ENCODE measurements at regions of chr7 and their contacts with region 1.

Region 1: GRCh38 chr7:50418086-50418515 is 32.0 kb downstream of the FIGNL1 start:
- DNase-seq: peak; percentile 87
- H3K4me3 Mint-ChIP-seq: no peak overlapping the region
- H3K27ac Mint-ChIP-seq: no peak overlapping the region
- H3K4me1 Mint-ChIP-seq: peaks cover 24% of the 10 kb centered on the region
- H3K27me3 Mint-ChIP-seq: no peaks in the 10 kb centered on the region

Region 2: GRCh38 chr7:48839108-48839507 is 1579.0 kb before region 1 on chr7:
- CTCF ChIA-PET with region 1: no interaction called
- POLR2A ChIA-PET with region 1: no interaction called
- intact Hi-C with region 1: no loop called
- DNase-seq: no peak
- H3K4me3 Mint-ChIP-seq: no peak overlapping the region
- H3K27ac Mint-ChIP-seq: no peak overlapping the region
- H3K4me1 Mint-ChIP-seq: no peaks in the 10 kb centered on the region
- H3K27me3 Mint-ChIP-seq: no peaks in the 10 kb centered on the region

Region 3: GRCh38 chr7:49731836-49732235 is 686.3 kb before region 1 on chr7:
- CTCF ChIA-PET with region 1: no interaction called
- POLR2A ChIA-PET with region 1: no interaction called
- intact Hi-C with region 1: no loop called
- DNase-seq: no peak
- H3K4me3 Mint-ChIP-seq: no peak overlapping the region
- H3K27ac Mint-ChIP-seq: no peak overlapping the region
- H3K4me1 Mint-ChIP-seq: no peaks in the 10 kb centered on the region
- H3K27me3 Mint-ChIP-seq: no peaks in the 10 kb centered on the region

Region 4: DNA sequence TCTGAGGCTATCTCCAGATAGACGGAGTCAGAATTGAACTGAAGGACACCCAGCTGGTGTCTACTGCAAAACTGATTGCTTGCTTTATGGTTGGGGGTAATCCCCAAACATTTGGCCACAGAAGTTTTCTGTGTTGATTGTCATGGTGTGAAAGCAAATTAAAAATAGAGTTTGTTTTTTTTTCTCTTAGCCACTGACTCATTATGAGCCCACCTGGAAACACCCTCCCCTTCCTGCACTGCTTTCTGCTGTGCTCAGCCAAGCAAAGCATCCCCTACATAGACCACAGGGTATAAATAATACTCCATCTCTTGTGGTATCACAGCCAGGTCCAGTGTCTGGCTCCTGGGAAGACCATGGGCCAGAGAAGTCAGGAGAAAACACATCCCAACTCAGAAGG is 651.1 kb before region 1 on chr7:
- CTCF ChIA-PET with region 1: no interaction called
- POLR2A ChIA-PET with region 1: no interaction called
- intact Hi-C with region 1: no loop called
- DNase-seq: no peak
- H3K4me3 Mint-ChIP-seq: no peak overlapping the region
- H3K27ac Mint-ChIP-seq: no peak overlapping the region
- H3K4me1 Mint-ChIP-seq: no peaks in the 10 kb centered on the region
- H3K27me3 Mint-ChIP-seq: peaks cover 14% of the 10 kb centered on the region

Region 5: DNA sequence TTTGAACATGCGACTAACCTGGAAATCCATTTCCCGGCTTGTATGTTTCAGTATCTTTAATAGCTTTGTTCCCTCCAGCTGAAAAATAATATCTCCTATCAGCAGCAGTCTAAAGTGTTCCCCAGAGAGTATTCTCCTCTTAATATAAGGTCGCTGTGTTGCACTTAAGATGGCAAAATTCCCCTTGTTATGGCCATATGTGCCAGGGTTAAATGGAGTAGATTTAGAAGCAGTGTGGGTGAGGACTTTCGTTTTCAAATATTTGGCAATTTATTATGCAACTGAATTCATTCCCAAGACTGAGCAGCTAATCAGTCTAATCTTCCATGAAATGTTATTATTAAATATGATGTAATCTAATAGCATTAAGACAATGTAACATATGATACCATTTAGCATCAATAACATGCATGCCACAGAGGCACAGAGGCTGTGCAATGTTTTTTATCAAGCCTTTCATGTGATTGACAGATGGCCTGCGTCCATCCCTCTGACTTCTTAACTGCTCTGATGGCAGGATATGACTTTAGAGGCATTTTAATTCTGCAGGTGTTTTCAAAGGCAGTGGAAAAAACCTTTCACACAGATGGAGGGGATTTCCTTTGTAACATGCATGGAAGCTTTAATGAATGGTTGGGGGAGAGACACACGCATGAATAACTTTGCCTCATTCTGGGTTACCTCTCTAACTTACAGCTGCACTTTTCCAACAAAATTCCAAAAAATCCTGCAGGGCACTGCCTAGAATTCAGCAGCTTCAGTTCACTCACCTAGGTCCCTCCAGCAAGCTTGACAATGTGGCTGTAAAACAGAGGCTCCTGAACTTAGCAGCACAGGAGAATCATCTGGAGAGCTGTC is 269.9 kb before region 1 on chr7:
- CTCF ChIA-PET with region 1: interaction called, 96 read pairs
- POLR2A ChIA-PET with region 1: no interaction called
- intact Hi-C with region 1: no loop called
- DNase-seq: peak; percentile 41
- H3K4me3 Mint-ChIP-seq: peak overlapping the region; percentile 16
- H3K27ac Mint-ChIP-seq: peak overlapping the region; percentile 54
- H3K4me1 Mint-ChIP-seq: peaks cover 70% of the 10 kb centered on the region
- H3K27me3 Mint-ChIP-seq: no peaks in the 10 kb centered on the region

Region 6: DNA sequence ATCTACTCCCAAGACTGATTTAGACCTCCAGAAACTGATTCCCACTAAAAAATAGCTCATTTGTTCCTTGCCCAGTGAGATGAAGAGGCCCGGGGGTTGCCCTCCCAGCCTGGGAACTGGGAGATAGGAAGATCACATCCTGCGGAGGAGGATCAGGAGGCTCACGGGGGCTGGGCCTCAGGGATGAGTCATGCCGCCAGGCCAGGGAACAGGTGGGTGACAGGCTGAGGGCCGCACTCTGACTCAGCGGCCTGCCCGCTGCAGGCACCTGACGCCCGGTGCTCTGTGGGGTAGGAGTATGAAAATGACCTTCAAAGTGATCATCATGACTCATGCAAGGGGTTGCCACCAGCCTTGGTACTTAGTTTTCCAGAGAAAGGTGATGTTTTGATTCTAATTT is 220.6 kb before region 1 on chr7:
- CTCF ChIA-PET with region 1: interaction called, 131 read pairs
- POLR2A ChIA-PET with region 1: no interaction called
- intact Hi-C with region 1: loop called (anchors 1 kb)
- DNase-seq: peak; percentile 90
- H3K4me3 Mint-ChIP-seq: peak overlapping the region; percentile 13
- H3K27ac Mint-ChIP-seq: peak overlapping the region; percentile 58
- H3K4me1 Mint-ChIP-seq: peaks cover 34% of the 10 kb centered on the region
- H3K27me3 Mint-ChIP-seq: peaks cover 2% of the 10 kb centered on the region

Region 7: DNA sequence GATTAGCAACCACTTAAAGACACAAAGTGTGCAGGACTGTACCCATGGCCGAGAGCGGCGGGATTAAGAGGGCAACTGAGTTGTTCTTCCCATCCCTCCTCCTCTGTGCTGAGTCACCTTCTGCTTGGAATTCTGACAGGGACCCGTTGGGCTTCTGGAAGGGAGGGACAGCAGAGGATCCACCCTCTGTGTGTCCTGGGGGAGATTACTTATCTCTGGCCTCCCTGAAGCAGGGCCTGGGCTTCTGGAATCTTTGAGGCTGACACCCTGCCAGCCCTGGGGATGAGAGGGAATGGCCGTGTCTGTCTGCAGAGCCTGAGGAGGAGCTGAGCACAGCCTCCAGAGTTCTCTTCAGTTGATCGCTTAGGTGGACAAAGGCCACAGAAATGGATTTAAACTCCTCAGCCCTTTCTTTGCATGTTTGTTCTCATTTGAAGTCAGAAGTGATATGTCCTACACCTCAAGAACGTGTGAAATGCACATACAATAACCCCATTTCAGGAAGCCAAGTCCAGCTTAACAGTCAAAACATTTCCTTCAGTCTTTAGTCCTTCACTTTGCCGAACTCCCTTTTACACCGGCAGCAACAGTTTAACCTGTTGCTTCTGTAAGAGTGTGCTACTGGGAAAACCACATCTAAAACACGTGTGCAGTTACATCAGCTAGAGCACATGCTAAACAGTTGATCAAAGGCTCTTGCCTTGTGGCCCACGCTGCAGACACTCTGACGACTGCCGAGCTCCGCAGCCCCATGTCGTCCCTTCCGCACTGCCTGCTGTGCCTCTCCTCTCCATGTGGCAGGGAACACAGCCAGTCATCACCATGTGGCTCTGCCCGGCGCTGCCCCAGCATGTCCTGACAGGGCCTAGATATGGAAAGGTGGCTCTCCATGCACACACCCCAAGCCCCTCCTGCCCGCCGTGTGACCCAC is 57.8 kb before region 1 on chr7:
- CTCF ChIA-PET with region 1: interaction called, 10 read pairs
- POLR2A ChIA-PET with region 1: no interaction called
- intact Hi-C with region 1: no loop called
- DNase-seq: peak; percentile 90
- H3K4me3 Mint-ChIP-seq: peak overlapping the region; percentile 61
- H3K27ac Mint-ChIP-seq: peak overlapping the region; percentile 97
- H3K4me1 Mint-ChIP-seq: peaks cover 98% of the 10 kb centered on the region
- H3K27me3 Mint-ChIP-seq: no peaks in the 10 kb centered on the region

Region 8: GRCh38 chr7:50379539-50379938 is 38.6 kb before region 1 on chr7:
- CTCF ChIA-PET with region 1: interaction called, 15 read pairs
- POLR2A ChIA-PET with region 1: no interaction called
- intact Hi-C with region 1: no loop called
- DNase-seq: no peak
- H3K4me3 Mint-ChIP-seq: no peak overlapping the region
- H3K27ac Mint-ChIP-seq: peak overlapping the region; percentile 34
- H3K4me1 Mint-ChIP-seq: peaks cover 94% of the 10 kb centered on the region
- H3K27me3 Mint-ChIP-seq: no peaks in the 10 kb centered on the region

Region 9: GRCh38 chr7:50404392-50404791 is 13.7 kb before region 1 on chr7:
- CTCF ChIA-PET with region 1: interaction called, 20 read pairs
- POLR2A ChIA-PET with region 1: no interaction called
- intact Hi-C with region 1: no loop called
- DNase-seq: no peak
- H3K4me3 Mint-ChIP-seq: no peak overlapping the region
- H3K27ac Mint-ChIP-seq: peak overlapping the region; percentile 49
- H3K4me1 Mint-ChIP-seq: peaks cover 81% of the 10 kb centered on the region
- H3K27me3 Mint-ChIP-seq: no peaks in the 10 kb centered on the region

Region 10: GRCh38 chr7:51482976-51483375 is 1064.9 kb after region 1 on chr7:
- CTCF ChIA-PET with region 1: no interaction called
- POLR2A ChIA-PET with region 1: no interaction called
- intact Hi-C with region 1: no loop called
- DNase-seq: no peak
- H3K4me3 Mint-ChIP-seq: no peak overlapping the region
- H3K27ac Mint-ChIP-seq: no peak overlapping the region
- H3K4me1 Mint-ChIP-seq: no peaks in the 10 kb centered on the region
- H3K27me3 Mint-ChIP-seq: no peaks in the 10 kb centered on the region